GM13976 (cell line): ENCODE measurements at regions of chr3 and their contacts with region 1.

Region 1: DNA sequence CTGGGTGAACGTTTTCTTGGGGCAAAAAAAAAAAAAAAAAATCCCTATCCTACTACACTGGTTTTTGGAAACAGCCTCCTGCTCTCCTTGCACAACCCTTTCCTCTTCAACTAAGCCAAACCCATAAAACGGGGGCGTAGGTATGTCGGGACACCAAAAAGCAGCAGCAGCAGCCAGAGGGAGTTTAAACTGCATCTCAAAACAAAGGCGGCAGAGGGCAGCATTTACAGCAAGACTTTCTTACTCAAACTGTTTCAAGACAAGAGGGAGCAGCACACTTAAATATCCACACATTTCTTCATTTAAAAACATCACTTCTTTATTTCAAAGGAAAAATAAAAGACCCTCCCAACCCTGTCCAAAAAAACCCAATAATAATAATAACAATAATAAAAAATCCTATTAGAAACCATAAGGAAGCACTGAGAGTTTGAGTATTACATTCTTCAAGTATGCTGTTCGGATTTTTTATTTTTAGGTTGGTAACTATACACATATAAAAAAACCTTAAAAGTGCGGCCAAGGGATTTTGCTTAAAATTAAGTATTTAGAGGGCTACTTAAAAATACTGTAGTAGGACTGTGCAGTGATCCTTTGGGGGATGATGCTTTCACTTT is 43.9 kb upstream of the PLXND1 start:
- DNase-seq: peak; percentile 68
- CTCF ChIP-seq: peak; percentile 59

Region 2: DNA sequence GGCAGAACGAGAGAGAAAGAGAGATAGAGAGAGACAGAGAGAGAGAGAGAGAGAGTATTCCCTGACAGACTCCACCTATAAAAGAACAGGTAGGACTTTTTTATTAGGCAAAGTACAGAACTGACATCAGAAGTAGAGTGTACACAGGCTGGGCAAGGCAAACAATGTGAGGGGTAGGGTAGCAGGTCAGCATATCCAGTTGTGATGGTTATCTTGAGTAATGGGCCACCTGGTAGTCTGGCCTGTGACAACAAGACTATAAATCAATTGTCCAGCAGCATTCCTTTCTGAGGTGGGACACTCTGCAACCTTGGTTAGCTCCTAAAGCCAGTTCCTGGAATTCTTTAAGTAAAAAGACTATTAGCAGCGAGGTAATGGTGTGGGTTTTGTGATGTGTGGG is 258.0 kb after region 1 on chr3:
- in situ Hi-C with region 1: loop called (anchors 10 kb)
- DNase-seq: no peak
- CTCF ChIP-seq: no peak